IMR-90 (cell line): ENCODE measurements at regions of chr5 and their contacts with region 1.

Region 1: GRCh38 chr5:171521219-171521633 is 101.8 kb downstream of the FGF18 start:
- DNase-seq: peak; percentile 92
- ATAC-seq: peak; percentile 95
- H3K4me3 ChIP-seq: no peak overlapping the region
- H3K27ac ChIP-seq: peak overlapping the region; percentile 81
- H3K4me1 ChIP-seq: peaks cover 23% of the 10 kb centered on the region
- H3K27me3 ChIP-seq: peaks cover 3% of the 10 kb centered on the region
- CTCF ChIP-seq: peak; percentile 20; the same call in 1 of the 2 replicates
- POLR2A ChIP-seq: no peak
- RAD21 ChIP-seq: peak; percentile 44

Region 2: GRCh38 chr5:171450423-171451331 is 70.5 kb before region 1 on chr5:
- CTCF ChIA-PET with region 1: no interaction called
- POLR2A ChIA-PET with region 1: no interaction called
- dilution Hi-C with region 1: no loop called
- in situ Hi-C with region 1: no loop called
- intact Hi-C with region 1: loop called (anchors 2 kb)
- DNase-seq: peak; percentile 73
- ATAC-seq: peak; percentile 91
- H3K4me3 ChIP-seq: peak overlapping the region; percentile 51
- H3K27ac ChIP-seq: peak overlapping the region; percentile 90
- H3K4me1 ChIP-seq: peaks cover 7% of the 10 kb centered on the region; the same call in 1 of the 2 replicates
- H3K27me3 ChIP-seq: no peaks in the 10 kb centered on the region; the same call in 1 of the 2 replicates
- CTCF ChIP-seq: no peak
- POLR2A ChIP-seq: peak; percentile 38; the same call in 1 of the 2 replicates
- RAD21 ChIP-seq: no peak

Region 3: DNA sequence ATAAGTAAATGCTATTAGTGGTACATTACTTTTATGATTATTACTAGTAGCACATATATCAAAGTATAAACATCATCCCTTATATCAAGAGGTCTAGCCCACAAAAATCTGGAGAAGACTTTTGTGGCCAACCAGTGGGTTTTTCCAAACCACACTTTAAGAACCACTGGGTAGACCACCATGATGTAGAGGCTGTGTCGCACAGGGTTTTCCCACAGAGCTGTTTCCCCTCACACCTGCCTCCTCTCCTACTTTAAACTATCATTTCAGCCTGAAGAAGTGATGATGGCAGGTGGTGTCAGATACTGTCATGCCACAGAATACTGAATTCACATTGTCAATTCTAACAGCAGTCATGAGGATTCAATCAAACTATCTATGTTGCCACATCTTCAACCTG is 376.0 kb after region 1 on chr5:
- CTCF ChIA-PET with region 1: no interaction called
- POLR2A ChIA-PET with region 1: no interaction called
- dilution Hi-C with region 1: no loop called
- in situ Hi-C with region 1: no loop called
- intact Hi-C with region 1: no loop called
- DNase-seq: no peak
- ATAC-seq: no peak
- H3K4me3 ChIP-seq: no peak overlapping the region
- H3K27ac ChIP-seq: no peak overlapping the region
- H3K4me1 ChIP-seq: no peaks in the 10 kb centered on the region
- H3K27me3 ChIP-seq: no peaks in the 10 kb centered on the region
- CTCF ChIP-seq: no peak
- POLR2A ChIP-seq: no peak
- RAD21 ChIP-seq: no peak

Region 4: DNA sequence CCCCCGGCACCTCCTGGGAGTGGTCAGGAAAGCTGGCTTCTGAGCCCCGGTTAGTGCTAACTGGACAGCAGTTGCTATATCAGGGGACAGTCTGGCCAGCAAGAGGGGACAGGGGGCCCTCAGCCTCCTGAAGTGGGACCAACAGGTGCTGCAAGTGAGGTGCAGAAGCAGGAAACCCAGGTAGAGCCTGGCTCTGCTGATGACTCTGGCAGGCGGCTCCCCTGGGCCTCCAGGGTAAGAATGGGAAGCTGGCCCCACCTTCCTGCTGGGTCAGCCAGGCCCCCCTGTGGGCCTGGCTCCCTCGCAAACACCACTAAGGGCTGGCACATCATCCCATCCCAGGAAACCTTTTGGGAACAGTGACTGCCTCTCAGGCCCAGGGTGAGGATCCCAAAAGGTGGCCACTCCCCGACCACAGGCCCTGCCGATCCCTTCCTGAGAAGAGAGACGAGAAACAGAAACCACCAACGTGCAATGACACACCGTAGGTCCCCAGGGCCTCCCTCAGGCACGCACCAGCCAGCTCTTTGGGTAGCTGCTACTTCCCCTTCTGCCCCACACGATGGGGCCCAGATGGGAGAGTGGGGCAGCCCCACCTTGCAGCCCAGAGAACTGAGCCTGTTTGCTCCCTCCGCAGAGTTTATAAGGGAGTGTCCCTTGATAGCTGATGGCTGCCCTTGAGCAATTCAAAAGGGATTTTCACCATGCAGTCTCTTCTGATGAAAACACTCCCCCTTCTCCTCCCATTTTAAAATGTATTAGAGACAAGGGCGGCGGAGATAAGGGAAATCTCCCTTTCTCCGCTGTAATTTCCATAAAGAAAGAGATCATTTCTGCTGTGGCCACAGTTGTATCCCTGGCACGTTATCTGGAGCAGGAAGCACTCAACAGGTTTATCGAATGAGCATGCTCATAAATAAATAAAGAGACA is 590.0 kb after region 1 on chr5:
- CTCF ChIA-PET with region 1: no interaction called
- POLR2A ChIA-PET with region 1: no interaction called
- dilution Hi-C with region 1: no loop called
- in situ Hi-C with region 1: no loop called
- intact Hi-C with region 1: no loop called
- DNase-seq: peak; percentile 56
- ATAC-seq: peak; percentile 37
- H3K4me3 ChIP-seq: peak overlapping the region; percentile 11; the same call in 1 of the 2 replicates
- H3K27ac ChIP-seq: peak overlapping the region; percentile 83
- H3K4me1 ChIP-seq: peaks cover 21% of the 10 kb centered on the region
- H3K27me3 ChIP-seq: no peaks in the 10 kb centered on the region
- CTCF ChIP-seq: no peak
- POLR2A ChIP-seq: no peak
- RAD21 ChIP-seq: no peak